Mammary epithelial cell (primary cell): ENCODE measurements at regions of chr19 and their contacts with region 1.

Region 1: DNA sequence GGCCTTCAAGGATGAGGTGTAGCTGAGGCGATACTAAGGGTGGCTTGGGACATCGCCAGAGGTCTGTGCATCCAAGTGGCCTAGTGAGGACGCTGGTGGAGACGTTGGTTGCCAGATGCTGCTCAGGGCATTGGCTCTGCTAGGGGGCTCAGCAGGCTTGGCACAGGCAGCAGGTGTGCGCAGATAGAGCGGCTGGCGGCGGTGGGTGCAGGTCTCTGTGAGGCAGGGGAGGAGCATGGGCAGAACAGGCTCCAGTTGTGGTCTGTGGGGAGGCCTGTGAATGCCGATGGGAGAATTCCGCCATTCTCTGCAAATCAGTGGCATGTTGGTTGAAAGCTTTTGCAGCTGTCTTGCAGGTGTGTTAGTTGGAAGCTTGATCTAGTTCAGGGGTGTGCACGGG is 21.2 kb downstream of the PRAM1 start:
- DNase-seq: no peak
- H3K4me3 ChIP-seq: no peak overlapping the region
- H3K27ac ChIP-seq: no peak overlapping the region
- H3K4me1 ChIP-seq: peaks cover 16% of the 10 kb centered on the region
- H3K27me3 ChIP-seq: no peaks in the 10 kb centered on the region
- CTCF ChIP-seq: no peak

Region 2: DNA sequence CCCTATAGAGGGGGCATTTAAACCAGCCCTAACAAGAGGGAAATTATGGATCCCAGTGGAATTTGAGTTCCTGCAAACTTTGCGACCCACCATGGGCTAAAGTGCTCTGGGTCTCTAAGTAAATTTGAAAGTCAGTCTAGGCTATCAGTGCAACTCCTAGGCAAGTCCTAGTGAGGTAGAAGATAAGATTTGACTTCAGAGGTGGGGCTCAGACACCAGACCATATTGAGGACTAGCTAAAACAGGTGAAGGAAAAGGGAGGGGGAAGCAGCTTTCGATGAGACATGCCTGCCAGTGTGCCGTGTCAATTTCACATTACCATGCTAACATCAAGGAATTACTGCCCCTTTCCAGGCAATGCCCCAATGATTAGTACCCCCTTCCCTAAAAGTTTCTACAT is 211.5 kb before region 1 on chr19:
- CTCF ChIA-PET with region 1: no interaction called
- dilution Hi-C with region 1: no loop called
- in situ Hi-C with region 1: no loop called
- intact Hi-C with region 1: no loop called
- DNase-seq: no peak
- H3K4me3 ChIP-seq: no peak overlapping the region
- H3K27ac ChIP-seq: no peak overlapping the region
- H3K4me1 ChIP-seq: no peaks in the 10 kb centered on the region
- H3K27me3 ChIP-seq: no peaks in the 10 kb centered on the region
- CTCF ChIP-seq: no peak

Region 3: GRCh38 chr19:8441725-8442544 is 39.3 kb before region 1 on chr19:
- CTCF ChIA-PET with region 1: no interaction called
- dilution Hi-C with region 1: no loop called
- in situ Hi-C with region 1: no loop called
- intact Hi-C with region 1: no loop called
- DNase-seq: no peak
- H3K4me3 ChIP-seq: no peak overlapping the region
- H3K27ac ChIP-seq: no peak overlapping the region
- H3K4me1 ChIP-seq: peaks cover 7% of the 10 kb centered on the region
- H3K27me3 ChIP-seq: no peaks in the 10 kb centered on the region
- CTCF ChIP-seq: no peak

Region 4: DNA sequence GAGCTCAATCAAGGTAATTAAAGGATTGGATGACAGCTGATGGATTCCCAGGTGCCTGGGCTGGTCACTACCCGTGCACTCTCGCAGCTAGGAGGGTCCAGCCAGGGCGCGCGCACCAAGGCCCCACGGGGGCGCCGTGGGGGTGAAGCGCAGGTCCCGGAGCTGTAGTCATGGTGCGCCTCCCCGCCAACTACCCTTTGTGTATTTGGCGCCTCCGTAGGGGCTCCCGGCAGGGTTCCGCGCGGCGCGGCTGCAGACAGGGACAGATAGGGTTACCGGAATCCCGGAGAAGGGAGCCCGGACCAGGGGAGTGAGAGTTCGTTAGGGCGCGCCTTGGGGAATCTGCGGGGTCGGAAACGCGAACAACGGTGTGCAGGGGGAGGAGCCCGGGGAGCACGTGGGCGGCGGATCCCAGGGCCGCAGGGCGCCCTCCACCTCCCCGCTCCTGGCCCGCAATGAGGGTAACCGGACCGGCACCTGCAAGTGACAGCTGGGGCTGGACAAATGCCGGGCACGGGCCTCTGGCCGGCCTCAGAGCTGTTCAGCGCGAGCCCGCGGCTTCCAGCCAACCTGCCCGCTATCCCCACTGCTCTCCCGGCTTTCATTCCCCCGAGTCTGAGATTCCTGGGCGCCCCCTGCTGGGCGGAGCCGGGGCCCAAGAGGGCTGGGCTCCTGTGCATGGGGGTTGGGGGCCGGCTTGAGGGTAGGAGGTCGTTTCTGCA is 24.6 kb after region 1 on chr19:
- CTCF ChIA-PET with region 1: no interaction called
- dilution Hi-C with region 1: no loop called
- in situ Hi-C with region 1: no loop called
- intact Hi-C with region 1: loop called (anchors 2 kb)
- DNase-seq: peak; percentile 52
- H3K4me3 ChIP-seq: peak overlapping the region; percentile 57 to 72 (median 57)
- H3K27ac ChIP-seq: no peak overlapping the region
- H3K4me1 ChIP-seq: peaks cover 9% of the 10 kb centered on the region
- H3K27me3 ChIP-seq: no peaks in the 10 kb centered on the region
- CTCF ChIP-seq: peak; percentile 55 to 88